CD8-positive, alpha-beta memory T cell (primary cell): ENCODE measurements at regions of chr11 and their contacts with region 1.

Region 1: GRCh38 chr11:118171269-118172062 is 5.0 kb downstream of the SCN2B start:
- DNase-seq: peak; percentile 51 to 76 (median 62)
- H3K4me3 ChIP-seq: no peak overlapping the region
- H3K4me3 Mint-ChIP-seq: no peak overlapping the region
- H3K27ac ChIP-seq: no peak overlapping the region
- H3K27ac Mint-ChIP-seq: peak overlapping the region in 1 of 8 donors; percentile 19
- H3K4me1 ChIP-seq: peaks cover 8% of the 10 kb centered on the region
- H3K4me1 Mint-ChIP-seq: peaks cover 0 to 4% (median 4%) of the 10 kb centered on the region in 3 donors
- H3K27me3 ChIP-seq: no peaks in the 10 kb centered on the region
- H3K27me3 Mint-ChIP-seq: peaks cover 11 to 22% of the 10 kb centered on the region in 2 donors

Region 2: GRCh38 chr11:118145285-118146227 is 25.9 kb before region 1 on chr11:
- CTCF ChIA-PET with region 1: interaction called, 34 read pairs
- POLR2A ChIA-PET with region 1: no interaction called
- DNase-seq: peak; percentile 81 to 90 (median 84)
- H3K4me3 ChIP-seq: peak overlapping the region; percentile 43
- H3K4me3 Mint-ChIP-seq: peak overlapping the region; percentile 78 to 91 (median 83)
- H3K27ac ChIP-seq: no peak overlapping the region
- H3K27ac Mint-ChIP-seq: peak overlapping the region in 2 of 8 donors; percentile 67 to 83
- H3K4me1 ChIP-seq: no peaks in the 10 kb centered on the region
- H3K4me1 Mint-ChIP-seq: peaks cover 0 to 9% (median 3%) of the 10 kb centered on the region in 3 donors
- H3K27me3 ChIP-seq: peaks cover 22% of the 10 kb centered on the region
- H3K27me3 Mint-ChIP-seq: peaks cover 46 to 54% of the 10 kb centered on the region in 2 donors

Region 3: DNA sequence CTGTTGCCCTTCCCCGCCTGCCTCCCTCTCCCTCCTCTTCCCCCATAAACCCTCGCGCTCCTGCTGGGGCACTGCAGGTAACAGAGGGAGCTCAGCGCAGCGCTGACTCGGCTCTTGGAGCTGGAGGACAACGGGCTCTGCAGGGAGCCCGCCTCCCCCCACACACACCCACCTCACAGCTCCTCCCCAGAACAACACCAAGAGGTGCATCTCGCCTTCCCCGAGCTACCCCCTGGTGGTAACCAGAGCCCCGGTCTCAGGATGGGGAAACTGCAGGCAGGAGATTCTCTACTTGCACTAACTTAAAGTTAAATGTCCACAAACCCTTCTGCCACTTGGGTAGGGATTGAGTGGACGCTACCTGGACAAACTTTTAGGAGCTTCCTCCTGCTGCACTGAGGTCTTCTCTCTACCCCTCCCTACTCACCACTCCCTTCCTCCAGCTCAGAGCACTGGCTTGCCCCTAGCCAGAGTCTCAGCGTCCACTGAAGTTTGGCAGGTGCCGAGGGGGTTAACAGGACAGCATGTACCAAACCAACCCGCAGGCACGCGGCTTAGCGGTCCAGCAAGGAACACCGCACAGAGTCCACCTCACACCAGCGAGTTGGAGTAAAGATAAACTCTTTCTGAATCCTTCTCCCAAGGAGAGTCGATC is 14.8 kb before region 1 on chr11:
- CTCF ChIA-PET with region 1: interaction called, 23 read pairs
- POLR2A ChIA-PET with region 1: no interaction called
- DNase-seq: peak in 4 of 5 donors; percentile 12 to 66 (median 20)
- H3K4me3 ChIP-seq: no peak overlapping the region
- H3K4me3 Mint-ChIP-seq: peak overlapping the region in 2 of 7 donors; percentile 15 to 37
- H3K27ac ChIP-seq: no peak overlapping the region
- H3K27ac Mint-ChIP-seq: peak overlapping the region in 2 of 8 donors; percentile 34 to 79
- H3K4me1 ChIP-seq: peaks cover 7% of the 10 kb centered on the region
- H3K4me1 Mint-ChIP-seq: peaks cover 11 to 24% (median 15%) of the 10 kb centered on the region in 3 donors
- H3K27me3 ChIP-seq: peaks cover 53% of the 10 kb centered on the region
- H3K27me3 Mint-ChIP-seq: peaks cover 64 to 78% of the 10 kb centered on the region in 2 donors